ENCODE measurements at regions of chr4 and their contacts with region 1.

Region 1: DNA sequence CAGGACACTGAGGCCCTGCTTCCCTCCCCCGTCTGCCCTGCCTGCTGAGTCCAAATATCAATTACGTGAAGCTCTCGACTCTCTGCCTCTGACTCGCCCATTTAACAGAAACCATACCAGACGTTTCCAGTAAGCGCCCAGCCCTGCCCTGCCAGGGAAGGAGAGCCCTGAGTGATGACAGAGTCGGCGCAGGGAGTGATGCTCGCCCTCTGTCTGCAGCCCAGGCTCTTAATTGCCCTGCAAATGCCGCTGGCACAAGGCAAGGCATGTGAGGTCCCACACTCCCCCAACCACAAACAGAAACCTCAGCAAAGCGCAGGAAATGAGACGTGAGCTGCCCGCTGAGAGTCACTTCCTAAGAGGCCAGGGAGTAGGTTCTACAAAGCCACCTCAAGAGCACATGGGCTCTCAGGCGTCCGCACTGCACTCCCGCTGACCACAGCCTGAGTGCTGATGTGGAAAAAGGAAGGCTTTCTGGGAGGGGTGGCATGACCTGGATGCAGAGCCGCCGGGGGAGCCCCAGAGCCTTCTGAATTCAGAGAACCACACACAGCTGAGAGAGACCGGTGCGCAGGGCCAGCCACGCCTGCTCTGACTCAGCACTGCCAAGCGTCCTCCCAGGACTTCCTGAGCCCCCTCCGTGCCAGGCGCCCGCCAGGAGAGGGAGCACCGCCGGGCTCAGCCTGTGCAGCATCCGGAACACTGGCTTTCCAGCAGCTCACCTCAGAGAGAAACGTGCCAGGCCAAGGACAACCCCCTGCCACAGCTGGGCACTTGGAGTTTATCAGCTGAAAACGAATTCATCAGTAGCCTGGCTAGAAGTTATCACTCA is 5.3 kb downstream of the ZFYVE28 start:
- DNase-seq: peak; percentile 63 to 98 (median 84)
- ATAC-seq: peak; percentile 73
- H3K4me3 ChIP-seq: peak overlapping the region; percentile 52
- H3K4me3 Mint-ChIP-seq: peak overlapping the region; percentile 74
- H3K27ac ChIP-seq: peak overlapping the region; percentile 81 to 96
- H3K27ac Mint-ChIP-seq: peak overlapping the region; percentile 94
- H3K4me1 ChIP-seq: peaks cover 90% of the 10 kb centered on the region
- H3K4me1 Mint-ChIP-seq: peaks cover 72% of the 10 kb centered on the region
- H3K27me3 ChIP-seq: peaks cover 6 to 9% of the 10 kb centered on the region in 2 experiments
- H3K27me3 Mint-ChIP-seq: peaks cover 4% of the 10 kb centered on the region
- CTCF ChIP-seq: no peak

Region 2: GRCh38 chr4:1899149-1900086 is 513.7 kb before region 1 on chr4:
- CTCF ChIA-PET with region 1: no interaction called
- POLR2A ChIA-PET with region 1: no interaction called
- intact Hi-C with region 1: no loop called
- DNase-seq: peak; percentile 56 to 90 (median 63)
- ATAC-seq: peak; percentile 98
- H3K4me3 ChIP-seq: no peak overlapping the region
- H3K4me3 Mint-ChIP-seq: no peak overlapping the region
- H3K27ac ChIP-seq: no peak overlapping the region
- H3K27ac Mint-ChIP-seq: no peak overlapping the region
- H3K4me1 ChIP-seq: peaks cover 9% of the 10 kb centered on the region
- H3K4me1 Mint-ChIP-seq: peaks cover 10% of the 10 kb centered on the region
- H3K27me3 ChIP-seq: no peaks in the 10 kb centered on the region
- H3K27me3 Mint-ChIP-seq: no peaks in the 10 kb centered on the region
- CTCF ChIP-seq: peak; percentile 90

Region 3: GRCh38 chr4:2281575-2282343 is 131.3 kb before region 1 on chr4:
- CTCF ChIA-PET with region 1: interaction called, 21 read pairs
- POLR2A ChIA-PET with region 1: interaction called, 17 read pairs
- intact Hi-C with region 1: loop called (anchors 1 to 5 kb)
- DNase-seq: peak; percentile 74 to 97 (median 84)
- ATAC-seq: peak; percentile 87
- H3K4me3 ChIP-seq: peak overlapping the region; percentile 13
- H3K4me3 Mint-ChIP-seq: peak overlapping the region; percentile 78
- H3K27ac ChIP-seq: peak overlapping the region; percentile 87 to 96
- H3K27ac Mint-ChIP-seq: peak overlapping the region; percentile 95
- H3K4me1 ChIP-seq: peaks cover 57% of the 10 kb centered on the region
- H3K4me1 Mint-ChIP-seq: peaks cover 38% of the 10 kb centered on the region
- H3K27me3 ChIP-seq: no peaks in the 10 kb centered on the region
- H3K27me3 Mint-ChIP-seq: no peaks in the 10 kb centered on the region
- CTCF ChIP-seq: peak; percentile 25

Region 4: GRCh38 chr4:2290974-2291704 is 122.0 kb before region 1 on chr4:
- CTCF ChIA-PET with region 1: interaction called, 7 read pairs
- POLR2A ChIA-PET with region 1: interaction called, 17 read pairs
- intact Hi-C with region 1: no loop called
- DNase-seq: peak; percentile 68 to 95 (median 77)
- ATAC-seq: peak; percentile 94
- H3K4me3 ChIP-seq: peak overlapping the region; percentile 19
- H3K4me3 Mint-ChIP-seq: peak overlapping the region; percentile 90
- H3K27ac ChIP-seq: peak overlapping the region; percentile 85 to 91
- H3K27ac Mint-ChIP-seq: peak overlapping the region; percentile 100
- H3K4me1 ChIP-seq: peaks cover 60% of the 10 kb centered on the region
- H3K4me1 Mint-ChIP-seq: peaks cover 56% of the 10 kb centered on the region
- H3K27me3 ChIP-seq: no peaks in the 10 kb centered on the region
- H3K27me3 Mint-ChIP-seq: no peaks in the 10 kb centered on the region
- CTCF ChIP-seq: no peak

Region 5: DNA sequence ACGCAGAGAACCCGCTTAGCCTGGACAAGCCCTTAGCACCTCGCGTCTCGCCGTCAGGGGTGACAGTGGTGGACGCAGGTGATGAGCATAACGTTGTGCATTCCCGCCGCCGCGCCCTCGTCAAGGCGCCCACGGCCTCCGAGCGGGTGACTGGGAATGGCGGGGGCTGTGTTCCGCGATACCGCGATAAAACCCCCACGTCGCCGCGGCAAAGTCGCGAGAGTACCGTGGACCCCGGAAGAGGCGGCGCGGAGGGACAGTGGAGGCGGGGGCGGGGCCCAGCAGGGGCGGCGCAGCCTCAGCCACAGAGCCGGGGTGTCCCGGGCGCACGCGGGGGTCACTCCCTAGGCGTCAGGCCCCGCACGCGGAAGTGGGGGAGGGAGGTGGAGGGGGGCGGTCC is 48.4 kb before region 1 on chr4:
- CTCF ChIA-PET with region 1: interaction called, 4 read pairs
- POLR2A ChIA-PET with region 1: interaction called, 5 read pairs
- intact Hi-C with region 1: loop called (anchors 2 kb)
- DNase-seq: peak; percentile 41 to 82 (median 57)
- ATAC-seq: peak; percentile 85
- H3K4me3 ChIP-seq: peak overlapping the region; percentile 73
- H3K4me3 Mint-ChIP-seq: peak overlapping the region; percentile 86
- H3K27ac ChIP-seq: peak overlapping the region; percentile 33 to 44
- H3K27ac Mint-ChIP-seq: peak overlapping the region; percentile 89
- H3K4me1 ChIP-seq: peaks cover 35% of the 10 kb centered on the region
- H3K4me1 Mint-ChIP-seq: peaks cover 21% of the 10 kb centered on the region
- H3K27me3 ChIP-seq: no peaks in the 10 kb centered on the region
- H3K27me3 Mint-ChIP-seq: no peaks in the 10 kb centered on the region
- CTCF ChIP-seq: no peak

Region 6: GRCh38 chr4:2402029-2402428 is 11.1 kb before region 1 on chr4:
- CTCF ChIA-PET with region 1: interaction called, 14 read pairs
- POLR2A ChIA-PET with region 1: interaction called, 20 read pairs
- intact Hi-C with region 1: no loop called
- DNase-seq: peak in 6 of 14 experiments; percentile 18 to 58 (median 34)
- ATAC-seq: peak; percentile 72
- H3K4me3 ChIP-seq: peak overlapping the region; percentile 25
- H3K4me3 Mint-ChIP-seq: peak overlapping the region; percentile 78
- H3K27ac ChIP-seq: no peak overlapping the region
- H3K27ac Mint-ChIP-seq: no peak overlapping the region
- H3K4me1 ChIP-seq: peaks cover 33% of the 10 kb centered on the region
- H3K4me1 Mint-ChIP-seq: peaks cover 41% of the 10 kb centered on the region
- H3K27me3 ChIP-seq: no peaks in the 10 kb centered on the region
- H3K27me3 Mint-ChIP-seq: no peaks in the 10 kb centered on the region
- CTCF ChIP-seq: no peak

Region 7: GRCh38 chr4:2451821-2452785 is 39.0 kb after region 1 on chr4:
- CTCF ChIA-PET with region 1: no interaction called
- POLR2A ChIA-PET with region 1: no interaction called
- intact Hi-C with region 1: no loop called
- DNase-seq: no peak
- ATAC-seq: no peak
- H3K4me3 ChIP-seq: no peak overlapping the region
- H3K4me3 Mint-ChIP-seq: no peak overlapping the region
- H3K27ac ChIP-seq: no peak overlapping the region
- H3K27ac Mint-ChIP-seq: no peak overlapping the region
- H3K4me1 ChIP-seq: no peaks in the 10 kb centered on the region
- H3K4me1 Mint-ChIP-seq: no peaks in the 10 kb centered on the region
- H3K27me3 ChIP-seq: no peaks in the 10 kb centered on the region
- H3K27me3 Mint-ChIP-seq: no peaks in the 10 kb centered on the region
- CTCF ChIP-seq: no peak

Region 8: DNA sequence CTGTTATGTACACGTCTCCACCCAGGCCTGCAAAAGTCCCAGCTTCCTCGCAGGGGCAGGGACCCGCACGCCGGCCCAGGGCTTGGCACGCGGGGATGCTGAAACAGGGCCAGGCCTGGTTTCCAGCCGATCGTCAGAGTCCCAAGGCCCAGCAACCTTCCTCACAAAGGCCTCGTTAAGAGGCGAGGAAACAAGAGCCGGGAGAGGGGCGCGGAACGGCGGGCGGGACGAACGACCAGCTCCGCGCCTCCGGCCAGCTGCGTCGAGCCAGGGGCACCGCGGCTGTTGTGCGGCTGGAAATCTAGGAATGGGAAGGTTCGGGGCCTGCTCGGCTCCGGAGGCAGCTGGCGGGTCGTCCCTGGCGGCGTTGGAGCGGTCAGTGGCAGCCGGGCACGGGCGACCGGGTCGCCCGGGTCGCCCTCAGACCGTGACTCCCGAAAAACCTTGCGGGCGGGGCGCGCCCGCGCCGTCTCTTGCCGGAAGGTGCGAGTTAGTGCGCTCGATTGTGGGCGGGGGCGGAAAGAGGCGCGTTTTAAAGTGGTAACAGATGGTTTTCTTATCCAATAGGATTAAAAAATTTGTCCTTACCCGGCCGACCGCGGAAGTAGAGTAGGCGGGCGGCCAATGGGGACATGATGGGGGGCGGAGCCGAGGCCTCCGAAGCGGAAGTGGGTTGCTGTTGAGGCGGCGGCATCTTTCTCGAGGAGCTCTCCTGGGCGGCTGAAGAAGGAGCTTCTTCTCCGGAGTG is 55.5 kb after region 1 on chr4 and contains the start of gene RNF4:
- CTCF ChIA-PET with region 1: interaction called, 3 read pairs
- POLR2A ChIA-PET with region 1: interaction called, 26 read pairs
- intact Hi-C with region 1: loop called (anchors 2 kb)
- DNase-seq: peak; percentile 89 to 98 (median 94)
- ATAC-seq: peak; percentile 84
- H3K4me3 ChIP-seq: peak within 1 kb of the TSS; percentile 98
- H3K4me3 Mint-ChIP-seq: peak within 1 kb of the TSS; percentile 94
- H3K27ac ChIP-seq: peak within 1 kb of the TSS; percentile 96 to 97
- H3K27ac Mint-ChIP-seq: peak within 1 kb of the TSS; percentile 94
- H3K4me1 ChIP-seq: peaks cover 48% of the 10 kb centered on the region
- H3K4me1 Mint-ChIP-seq: peaks cover 48% of the 10 kb centered on the region
- H3K27me3 ChIP-seq: no peaks in the 10 kb centered on the region
- H3K27me3 Mint-ChIP-seq: no peaks in the 10 kb centered on the region
- CTCF ChIP-seq: no peak
- total RNA-seq, gene RNF4: 106 to 109 TPM

Region 9: GRCh38 chr4:2617955-2618354 is 204.9 kb after region 1 on chr4:
- CTCF ChIA-PET with region 1: no interaction called
- POLR2A ChIA-PET with region 1: no interaction called
- intact Hi-C with region 1: no loop called
- DNase-seq: no peak
- ATAC-seq: no peak
- H3K4me3 ChIP-seq: no peak overlapping the region
- H3K4me3 Mint-ChIP-seq: no peak overlapping the region
- H3K27ac ChIP-seq: no peak overlapping the region
- H3K27ac Mint-ChIP-seq: no peak overlapping the region
- H3K4me1 ChIP-seq: peaks cover 6% of the 10 kb centered on the region
- H3K4me1 Mint-ChIP-seq: peaks cover 52% of the 10 kb centered on the region
- H3K27me3 ChIP-seq: no peaks in the 10 kb centered on the region
- H3K27me3 Mint-ChIP-seq: no peaks in the 10 kb centered on the region
- CTCF ChIP-seq: no peak

Region 10: DNA sequence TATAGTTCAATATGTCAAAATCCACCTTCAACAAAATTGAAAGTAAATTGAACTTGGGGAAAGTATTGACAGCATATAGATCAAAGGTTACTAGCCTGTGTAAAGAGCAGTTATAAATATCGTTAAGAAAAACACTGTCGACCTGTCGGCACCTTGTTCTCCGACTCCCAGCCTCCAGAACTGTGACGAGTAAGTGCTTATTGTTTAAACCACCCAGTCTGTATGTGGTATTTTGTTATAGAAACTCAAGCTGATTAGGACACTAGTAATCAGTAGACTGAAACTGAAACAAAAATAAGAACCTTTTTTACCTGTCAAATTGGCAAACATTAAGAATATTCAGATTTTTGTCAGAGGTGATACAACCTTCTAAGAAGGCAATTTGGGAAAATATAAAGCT is 678.4 kb after region 1 on chr4:
- CTCF ChIA-PET with region 1: no interaction called
- POLR2A ChIA-PET with region 1: no interaction called
- intact Hi-C with region 1: no loop called
- DNase-seq: no peak
- ATAC-seq: no peak
- H3K4me3 ChIP-seq: no peak overlapping the region
- H3K4me3 Mint-ChIP-seq: no peak overlapping the region
- H3K27ac ChIP-seq: no peak overlapping the region
- H3K27ac Mint-ChIP-seq: no peak overlapping the region
- H3K4me1 ChIP-seq: no peaks in the 10 kb centered on the region
- H3K4me1 Mint-ChIP-seq: peaks cover 12% of the 10 kb centered on the region
- H3K27me3 ChIP-seq: no peaks in the 10 kb centered on the region
- H3K27me3 Mint-ChIP-seq: no peaks in the 10 kb centered on the region
- CTCF ChIP-seq: no peak

Measured in CD4-positive, alpha-beta T cell (primary cell).